Ascending aorta (tissue), 2 donors: ENCODE measurements at regions of chrX and their contacts with region 1.

Region 1: DNA sequence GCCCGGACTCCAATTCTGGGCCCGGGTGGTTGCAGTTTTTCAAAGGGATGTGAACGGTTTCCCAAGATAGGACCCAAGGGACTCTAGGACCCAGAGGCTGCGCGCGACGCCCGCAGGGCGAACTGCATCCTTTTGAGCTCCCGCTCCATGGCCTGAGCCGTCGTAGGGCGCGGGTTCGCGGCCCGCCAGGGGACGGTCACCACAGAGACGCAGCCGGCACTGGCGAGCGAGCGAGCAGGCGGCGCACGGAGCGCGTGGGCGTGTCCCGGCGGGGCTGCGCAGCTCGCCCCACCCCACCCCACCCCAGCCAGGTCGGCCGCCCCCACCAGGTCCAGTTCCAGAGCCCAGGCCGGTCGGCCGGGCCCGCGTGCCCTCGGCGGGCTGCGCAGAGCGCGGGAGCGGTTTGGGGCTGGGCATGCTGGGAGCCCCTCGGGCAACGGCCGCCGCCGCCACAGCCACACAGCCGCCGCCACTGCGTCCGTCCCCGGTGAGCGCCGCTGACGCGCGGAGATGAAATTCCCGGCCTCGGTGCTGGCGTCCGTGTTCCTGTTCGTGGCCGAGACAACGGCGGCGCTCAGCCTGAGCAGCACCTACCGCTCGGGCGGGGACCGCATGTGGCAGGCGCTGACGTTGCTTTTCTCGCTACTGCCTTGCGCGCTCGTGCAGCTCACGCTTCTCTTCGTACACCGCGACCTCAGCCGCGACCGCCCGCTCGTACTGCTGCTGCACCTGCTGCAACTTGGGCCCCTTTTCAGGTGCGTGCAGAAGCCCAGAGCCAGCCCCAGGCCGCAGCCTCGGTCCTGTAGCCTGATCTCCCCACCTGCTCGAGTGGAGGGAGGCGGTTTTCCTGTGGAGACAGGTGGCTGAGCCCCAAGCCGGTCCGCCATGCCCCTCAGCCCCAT is at the start of gene XK:
- DNase-seq: peak in 1 of 2 donors; percentile 71
- H3K4me3 ChIP-seq: peak within 1 kb of the TSS; percentile 66 to 70
- H3K27ac ChIP-seq: peak within 1 kb of the TSS; percentile 79 to 83
- H3K4me1 ChIP-seq: no peaks in the 10 kb centered on the region
- H3K27me3 ChIP-seq: no peaks in the 10 kb centered on the region
- CTCF ChIP-seq: no peak
- total RNA-seq, gene XK: 0.53 TPM

Region 2: DNA sequence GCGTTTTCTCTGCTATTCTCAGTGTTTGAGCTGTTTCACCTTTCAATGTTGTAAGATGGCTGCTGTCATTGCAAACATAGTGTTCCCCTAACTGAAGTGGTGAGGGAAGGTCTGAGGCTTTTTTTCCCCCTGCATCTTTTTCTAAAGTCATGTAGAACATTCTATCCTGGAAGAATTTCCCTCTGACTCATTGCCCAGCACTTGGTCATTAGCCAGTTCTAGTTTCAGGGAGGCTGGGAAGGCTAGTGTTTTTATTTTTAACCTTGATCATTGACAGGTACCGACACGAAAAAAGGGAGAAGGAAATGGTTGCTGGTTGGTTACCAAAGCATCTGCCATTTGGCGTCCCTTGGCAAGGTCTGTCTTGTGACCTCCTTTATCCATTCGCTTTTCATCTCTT is 107.7 kb before region 1 on chrX:
- intact Hi-C with region 1: loop called (anchors 5 kb)
- DNase-seq: no peak
- H3K4me3 ChIP-seq: no peak overlapping the region
- H3K27ac ChIP-seq: peak overlapping the region in 1 of 2 donors; percentile 48
- H3K4me1 ChIP-seq: peaks cover 0 to 3% of the 10 kb centered on the region in 2 donors
- H3K27me3 ChIP-seq: no peaks in the 10 kb centered on the region
- CTCF ChIP-seq: no peak

Region 3: GRCh38 chrX:37846934-37847732 is 161.4 kb after region 1 on chrX and contains the start of gene DYNLT3:
- intact Hi-C with region 1: loop called (anchors 10 kb)
- DNase-seq: peak; percentile 28 to 92
- H3K4me3 ChIP-seq: peak within 1 kb of the TSS; percentile 51 to 88
- H3K27ac ChIP-seq: peak within 1 kb of the TSS; percentile 88 to 89
- H3K4me1 ChIP-seq: no peaks in the 10 kb centered on the region
- H3K27me3 ChIP-seq: no peaks in the 10 kb centered on the region
- CTCF ChIP-seq: no peak
- total RNA-seq, gene DYNLT3: 32.2 TPM

Region 4: GRCh38 chrX:38774249-38774648 is 1088.5 kb after region 1 on chrX:
- intact Hi-C with region 1: no loop called
- DNase-seq: no peak
- H3K4me3 ChIP-seq: no peak overlapping the region
- H3K27ac ChIP-seq: no peak overlapping the region
- H3K4me1 ChIP-seq: no peaks in the 10 kb centered on the region
- H3K27me3 ChIP-seq: no peaks in the 10 kb centered on the region
- CTCF ChIP-seq: no peak